ENCODE measurements at regions of chr18 and their contacts with region 1.

Region 1: DNA sequence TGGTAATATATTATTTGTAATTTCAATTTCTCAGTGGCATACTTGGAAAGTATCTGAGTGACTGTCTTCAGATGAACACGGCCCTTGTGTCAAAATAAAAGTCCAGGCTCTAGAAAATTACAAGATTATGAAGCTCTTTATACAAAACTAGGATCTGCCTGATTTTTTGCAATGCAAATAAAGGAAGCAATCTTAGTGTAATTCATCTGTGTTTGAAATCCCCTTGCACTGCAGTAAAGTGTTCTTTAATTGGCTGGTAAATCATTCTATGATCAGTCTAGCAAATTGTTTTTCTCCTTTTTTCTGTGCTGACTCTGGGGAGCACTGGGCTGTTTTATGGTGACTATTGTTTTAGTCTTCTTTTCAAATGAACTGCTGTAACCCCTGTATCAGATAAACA is 1039.0 kb downstream of the SOCS6 start:
- DNase-seq: no peak
- H3K4me3 ChIP-seq: no peak overlapping the region
- H3K27ac ChIP-seq: no peak overlapping the region
- H3K4me1 ChIP-seq: peaks cover 3% of the 10 kb centered on the region
- H3K27me3 ChIP-seq: no peaks in the 10 kb centered on the region
- CTCF ChIP-seq: no peak
- POLR2A ChIP-seq: no peak

Region 2: DNA sequence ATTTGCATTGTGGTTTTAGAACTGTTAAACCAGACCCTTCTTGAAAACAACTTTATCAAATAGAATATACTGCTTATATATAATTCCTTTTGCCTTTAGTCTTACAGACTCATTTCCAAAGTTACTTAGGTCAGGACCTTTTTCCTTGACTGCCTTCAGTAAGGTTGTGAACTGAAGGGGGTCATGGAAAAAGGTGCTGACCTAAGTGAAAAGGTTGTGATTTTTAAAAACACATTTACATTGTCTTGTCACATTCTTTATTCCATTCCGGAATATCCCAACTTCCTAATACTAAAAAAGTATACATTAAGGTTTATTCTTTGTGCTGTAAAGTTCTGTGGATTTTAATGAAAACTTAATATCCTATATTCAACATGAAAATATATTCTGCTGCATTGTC is 457.6 kb before region 1 on chr18:
- CTCF ChIA-PET with region 1: no interaction called
- POLR2A ChIA-PET with region 1: no interaction called
- dilution Hi-C with region 1: no loop called
- intact Hi-C with region 1: loop called (anchors 5 kb)
- DNase-seq: no peak
- H3K4me3 ChIP-seq: no peak overlapping the region
- H3K27ac ChIP-seq: no peak overlapping the region
- H3K4me1 ChIP-seq: no peaks in the 10 kb centered on the region
- H3K27me3 ChIP-seq: no peaks in the 10 kb centered on the region
- CTCF ChIP-seq: no peak
- POLR2A ChIP-seq: no peak